HEK293 (cell line): ENCODE measurements at regions of chr4 and their contacts with region 1.

Region 1: GRCh38 chr4:64156253-64156652 is 253.0 kb downstream of the TECRL start:
- H3K4me3 ChIP-seq: no peak overlapping the region
- H3K27ac ChIP-seq: no peak overlapping the region
- H3K4me1 ChIP-seq: no peaks in the 10 kb centered on the region
- CTCF ChIP-seq: no peak

Region 2: DNA sequence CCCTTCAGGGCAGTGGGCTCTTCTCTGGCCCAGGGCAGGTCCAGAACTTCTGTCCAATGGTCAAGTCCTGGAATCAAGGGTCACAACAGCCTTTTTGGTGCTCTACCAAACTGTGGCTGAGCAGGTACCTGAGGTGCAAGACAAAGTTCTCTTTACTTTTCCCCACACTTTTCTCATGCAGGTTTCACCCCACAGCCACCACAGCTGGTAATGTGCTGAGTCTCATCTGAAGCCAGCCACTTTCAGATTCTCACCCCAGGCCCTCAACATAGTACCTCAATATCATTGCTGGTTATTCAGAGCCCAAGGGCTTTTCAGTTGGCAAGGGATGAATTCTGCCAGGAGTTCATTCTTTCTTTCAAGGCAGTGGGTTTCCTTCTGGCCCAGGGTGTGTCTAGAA is 173.0 kb before region 1 on chr4:
- CTCF ChIA-PET with region 1: no interaction called
- POLR2A ChIA-PET with region 1: no interaction called
- H3K4me3 ChIP-seq: no peak overlapping the region
- H3K27ac ChIP-seq: no peak overlapping the region
- H3K4me1 ChIP-seq: no peaks in the 10 kb centered on the region
- CTCF ChIP-seq: no peak

Region 3: GRCh38 chr4:64539234-64539849 is 383.1 kb after region 1 on chr4:
- CTCF ChIA-PET with region 1: interaction called, 14 read pairs
- POLR2A ChIA-PET with region 1: no interaction called
- H3K4me3 ChIP-seq: no peak overlapping the region
- H3K27ac ChIP-seq: no peak overlapping the region
- H3K4me1 ChIP-seq: no peaks in the 10 kb centered on the region
- CTCF ChIP-seq: no peak

Region 4: DNA sequence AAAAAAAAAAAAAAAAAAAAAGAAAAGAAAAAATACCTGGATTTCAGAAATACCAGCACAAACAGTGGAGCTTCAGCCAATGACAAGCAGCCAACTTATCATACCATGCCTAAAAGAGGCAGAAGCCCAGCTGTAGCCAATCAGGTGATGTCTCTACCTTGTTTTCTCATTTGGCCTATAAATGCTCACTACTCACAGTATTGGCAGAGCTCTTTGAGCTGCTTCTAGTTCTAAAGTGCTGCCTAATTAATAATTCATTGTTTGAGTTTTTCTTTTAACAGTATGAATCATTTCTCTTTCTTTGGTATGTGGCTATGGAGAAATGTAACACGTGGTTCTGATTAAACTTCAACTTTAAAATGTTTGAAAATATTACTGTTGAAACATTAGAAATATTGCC is 441.8 kb after region 1 on chr4:
- CTCF ChIA-PET with region 1: no interaction called
- POLR2A ChIA-PET with region 1: no interaction called
- H3K4me3 ChIP-seq: no peak overlapping the region
- H3K27ac ChIP-seq: no peak overlapping the region
- H3K4me1 ChIP-seq: no peaks in the 10 kb centered on the region
- CTCF ChIP-seq: no peak